Heart left ventricle (tissue), 16 donors: ENCODE measurements at regions of chr9 and their contacts with region 1.

Region 1: DNA sequence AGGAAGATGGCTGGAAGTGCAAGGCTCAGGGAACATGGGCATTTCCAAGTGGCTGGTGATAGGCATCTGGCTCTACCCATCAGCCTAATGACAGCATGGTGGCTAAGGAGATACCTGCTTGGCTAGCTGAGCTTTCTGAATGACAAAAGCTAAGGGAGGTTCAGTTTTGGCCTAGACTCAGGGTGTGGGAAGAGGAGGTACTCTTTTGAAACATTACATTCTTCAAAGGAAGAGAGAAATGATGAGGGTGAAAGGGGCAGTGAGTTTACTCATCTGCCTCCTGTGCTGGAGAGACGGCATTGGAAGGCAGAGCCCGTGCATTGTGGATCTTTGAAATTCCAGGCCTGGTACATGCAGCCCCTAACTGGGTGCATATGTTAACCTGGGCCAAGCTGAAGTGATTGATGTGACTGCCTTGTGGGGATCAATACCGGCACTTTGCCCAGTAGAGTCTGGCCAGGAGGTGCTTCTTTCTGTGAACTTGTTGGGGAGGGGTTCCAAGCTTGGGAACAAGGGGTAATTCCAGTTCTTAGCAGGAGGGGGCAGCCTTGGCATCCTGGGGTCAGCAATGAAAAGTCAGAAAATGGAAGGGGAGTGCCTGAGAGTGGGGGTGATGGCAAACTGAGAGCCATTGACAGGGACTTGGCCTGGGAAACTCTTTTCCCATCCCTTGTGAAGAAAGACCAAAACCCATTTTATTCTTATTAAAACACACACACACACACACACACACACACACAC is 108.6 kb downstream of the ACER2 start:
- DNase-seq: no peak
- ATAC-seq: no peak
- H3K4me3 ChIP-seq: no peak overlapping the region
- H3K27ac ChIP-seq: no peak overlapping the region
- H3K4me1 ChIP-seq: no peaks in the 10 kb centered on the region
- H3K27me3 ChIP-seq: peaks cover 0 to 1% (median 0%) of the 10 kb centered on the region in 9 donors
- CTCF ChIP-seq: no peak
- POLR2A ChIP-seq: no peak

Region 2: DNA sequence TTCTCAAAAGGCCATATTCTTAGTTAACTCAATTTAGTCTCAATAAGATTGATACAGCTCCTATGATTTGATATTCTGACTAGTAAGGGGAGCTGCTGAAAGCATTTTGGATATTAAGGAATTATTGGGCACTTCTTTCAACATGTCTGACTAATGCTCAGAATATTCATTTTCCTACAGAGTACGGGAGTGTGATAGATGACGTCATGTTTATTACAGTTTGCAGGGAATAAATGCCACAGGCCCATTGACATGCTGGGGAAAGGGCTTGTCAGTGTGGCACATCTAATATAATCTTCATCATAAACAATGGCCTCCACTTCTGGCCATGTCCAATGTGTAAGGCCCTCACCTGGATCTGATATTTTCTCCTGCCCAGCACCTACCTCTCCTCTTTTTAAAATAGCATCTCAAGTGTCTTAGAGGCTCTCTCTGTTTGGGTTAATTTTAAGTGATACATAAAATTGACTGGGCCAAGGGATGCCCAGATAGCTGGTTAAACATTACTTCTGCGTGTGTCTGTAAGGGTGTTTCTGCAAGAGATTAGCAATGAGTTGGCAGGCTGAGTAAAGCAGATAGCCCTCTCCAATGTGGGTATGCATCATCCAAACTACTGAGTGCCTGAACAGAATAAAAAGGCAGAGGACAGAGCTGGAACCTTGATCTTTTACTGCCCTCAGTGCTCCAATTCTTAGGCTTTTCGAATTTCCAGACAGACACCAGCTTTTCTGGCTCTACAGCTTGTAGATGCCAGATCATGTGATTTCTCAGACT is 172.1 kb after region 1 on chr9:
- intact Hi-C with region 1: loop called in 1 of 10 experiments (anchors 10 kb)
- DNase-seq: no peak
- ATAC-seq: no peak
- H3K4me3 ChIP-seq: no peak overlapping the region
- H3K27ac ChIP-seq: no peak overlapping the region
- H3K4me1 ChIP-seq: no peaks in the 10 kb centered on the region
- H3K27me3 ChIP-seq: no peaks in the 10 kb centered on the region
- CTCF ChIP-seq: no peak
- POLR2A ChIP-seq: no peak

Region 3: DNA sequence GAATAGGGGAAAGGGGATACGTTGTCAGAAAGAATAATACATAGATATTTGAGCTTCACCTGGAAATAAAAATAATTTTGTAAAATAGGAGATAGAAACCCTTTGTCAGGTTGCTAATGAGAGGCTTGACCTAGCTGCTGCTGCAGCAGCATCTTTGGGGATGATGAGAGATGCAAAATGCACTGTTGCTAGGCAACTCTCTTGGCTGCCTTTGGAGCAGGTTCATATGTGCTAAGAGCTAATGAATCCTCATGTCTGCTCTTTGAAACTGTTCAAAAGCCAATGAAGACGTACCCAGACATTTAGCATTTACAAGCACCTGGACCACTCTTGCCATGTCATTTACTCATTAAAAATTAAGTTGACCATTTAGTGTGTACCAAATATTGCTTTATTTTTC is 1288.4 kb after region 1 on chr9:
- intact Hi-C with region 1: loop called in 1 of 10 experiments (anchors 10 kb)
- DNase-seq: no peak
- ATAC-seq: no peak
- H3K4me3 ChIP-seq: no peak overlapping the region
- H3K27ac ChIP-seq: no peak overlapping the region
- H3K4me1 ChIP-seq: peaks cover 0 to 3% (median 0%) of the 10 kb centered on the region in 12 donors
- H3K27me3 ChIP-seq: no peaks in the 10 kb centered on the region
- CTCF ChIP-seq: no peak
- POLR2A ChIP-seq: no peak